ENCODE measurements at regions of chr4 and their contacts with region 1.

Region 1: DNA sequence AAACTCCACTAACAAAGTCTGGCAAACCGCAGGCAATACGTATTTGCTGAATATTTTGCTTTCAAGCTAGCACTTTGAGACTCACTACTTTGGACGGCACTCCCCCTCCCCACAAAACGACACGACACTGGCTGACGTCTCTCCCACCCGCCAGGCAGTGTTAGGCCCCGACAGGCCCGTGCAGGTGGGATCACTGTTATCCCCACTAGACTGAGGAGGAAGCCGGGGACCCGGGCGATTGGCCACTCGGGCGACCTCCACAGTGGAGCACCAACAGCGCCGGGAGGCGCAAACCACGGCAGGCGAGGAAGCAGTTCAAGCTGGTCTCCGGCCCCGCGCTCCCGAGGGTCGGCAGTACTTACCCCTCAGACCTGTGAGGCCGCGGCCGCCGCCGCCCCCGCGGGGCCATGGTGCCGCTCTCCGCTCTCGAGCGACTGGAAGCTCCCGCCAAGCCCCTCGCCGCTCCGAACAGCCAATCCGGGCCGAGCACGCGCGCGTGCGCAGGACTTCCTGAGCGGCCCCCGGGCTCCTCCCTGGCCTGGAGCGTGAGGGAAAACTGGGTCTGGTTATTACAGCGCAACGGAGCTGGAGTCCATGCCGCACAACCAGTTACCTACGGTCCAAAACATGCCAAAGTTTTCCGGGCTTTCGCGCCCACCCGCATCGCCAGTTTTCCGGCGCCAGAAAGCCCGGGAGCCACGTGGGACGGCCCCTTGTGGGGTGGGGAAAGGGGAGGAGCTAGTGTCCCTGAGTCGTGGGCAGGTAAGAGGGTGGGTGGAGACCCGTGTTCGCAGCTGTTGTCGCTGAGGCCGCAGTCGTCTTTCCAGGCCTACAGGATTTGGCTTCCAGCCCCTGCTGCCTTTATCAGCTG is at the start of gene CENPU:
- DNase-seq: peak; percentile 96 to 97
- ATAC-seq: peak; percentile 98 to 99 (median 98)
- H3K4me3 ChIP-seq: peak within 1 kb of the TSS; percentile 97
- H3K27ac ChIP-seq: peak within 1 kb of the TSS; percentile 71
- H3K4me1 ChIP-seq: peaks cover 9% of the 10 kb centered on the region
- H3K27me3 ChIP-seq: no peaks in the 10 kb centered on the region
- CTCF ChIP-seq: no peak
- total RNA-seq, gene CENPU: 0.63 to 1.6 (median 0.93) TPM

Region 2: DNA sequence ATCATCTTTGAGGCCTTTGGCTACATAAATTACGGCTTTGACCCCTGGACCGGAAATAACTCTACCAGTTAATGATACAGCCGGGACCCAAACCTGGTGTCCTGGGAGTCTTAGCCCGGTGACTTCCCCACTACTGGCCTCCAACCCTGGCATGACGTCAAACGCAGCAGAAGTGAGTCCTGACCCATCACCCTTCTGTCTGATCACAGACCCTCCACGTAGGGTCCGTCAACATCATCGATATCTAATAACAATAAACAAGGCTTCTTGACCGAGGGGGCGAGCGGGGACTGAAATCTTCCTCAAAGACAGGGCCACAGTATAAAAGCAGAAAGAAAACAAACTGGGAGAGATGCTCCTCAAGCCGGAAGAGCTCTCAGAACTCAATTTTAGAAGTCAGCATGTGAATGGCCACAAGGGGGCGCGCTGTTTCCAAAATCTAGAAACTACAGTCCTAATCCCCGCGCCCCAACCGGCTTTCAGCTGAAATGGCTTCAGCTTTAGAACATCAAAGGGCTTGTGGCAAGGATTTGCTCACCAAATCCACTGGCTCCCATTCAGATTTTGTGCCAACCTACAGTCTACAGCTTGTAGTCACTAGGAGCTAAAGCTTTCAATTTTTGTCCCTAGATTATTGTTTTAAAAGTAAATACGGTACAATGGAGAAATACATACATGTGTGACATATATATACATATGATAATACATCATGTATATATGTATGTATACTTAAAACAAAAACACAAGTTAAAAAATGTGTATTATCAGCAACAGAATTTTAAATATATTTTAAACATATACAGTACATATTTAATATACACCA is 469.8 kb before region 1 on chr4:
- intact Hi-C with region 1: loop called in 1 of 2 experiments (anchors 10 kb)
- DNase-seq: peak; percentile 93 to 95
- ATAC-seq: peak; percentile 78 to 95 (median 86)
- H3K4me3 ChIP-seq: no peak overlapping the region
- H3K27ac ChIP-seq: no peak overlapping the region
- H3K4me1 ChIP-seq: no peaks in the 10 kb centered on the region
- H3K27me3 ChIP-seq: no peaks in the 10 kb centered on the region
- CTCF ChIP-seq: peak; percentile 95

Region 3: DNA sequence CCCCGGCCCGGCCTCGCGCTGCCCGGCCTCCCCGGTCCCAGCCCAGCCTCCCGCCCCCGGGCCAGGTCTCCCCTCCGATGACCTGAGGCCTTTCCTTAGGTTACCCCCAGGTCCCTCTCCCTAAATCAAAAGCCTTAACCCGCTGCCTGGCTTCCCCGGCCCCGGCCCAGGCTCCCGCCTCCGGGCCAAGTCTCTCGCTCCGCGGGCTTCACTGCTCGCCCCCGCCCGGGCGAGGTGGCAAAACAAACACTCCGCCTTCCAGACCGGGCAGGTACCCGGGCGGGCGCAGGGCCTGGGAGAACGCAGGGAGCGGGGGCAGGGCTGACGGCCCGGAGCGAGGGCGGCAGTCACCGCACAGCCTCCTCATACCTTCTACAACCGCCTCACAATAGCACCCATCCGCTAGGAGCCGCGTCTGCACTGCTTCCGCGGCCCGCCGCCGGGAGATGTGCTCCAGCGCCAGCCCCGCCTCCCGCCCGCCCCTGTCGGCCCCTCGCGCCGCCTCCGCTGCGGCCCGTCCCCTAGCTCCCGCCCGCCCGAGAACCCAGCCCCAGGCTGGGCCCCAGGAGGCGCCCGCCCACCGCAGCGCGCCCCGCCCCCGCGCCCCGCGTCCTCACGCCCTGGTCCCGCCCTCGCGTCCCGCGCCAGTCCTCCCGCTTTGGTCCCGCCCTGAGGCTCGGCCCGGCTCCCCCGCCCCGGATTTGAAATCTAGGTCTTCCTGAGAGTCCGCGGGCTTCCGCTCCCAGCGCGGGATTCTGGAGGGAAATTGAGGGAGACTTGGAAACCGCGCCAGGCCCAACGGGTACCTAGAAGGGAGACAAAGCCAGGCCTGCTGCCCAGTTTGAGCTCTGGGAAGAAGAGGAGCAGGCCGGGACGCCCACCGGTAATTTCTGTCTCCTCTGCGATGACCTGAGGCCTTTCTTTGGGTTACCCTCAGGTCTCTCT is 84.6 kb before region 1 on chr4 and contains the starts of genes CASP3 and PRIMPOL:
- intact Hi-C with region 1: loop called in 1 of 2 experiments (anchors 5 kb)
- DNase-seq: peak; percentile 98 to 99
- ATAC-seq: peak; percentile 92 to 95 (median 94)
- H3K4me3 ChIP-seq: peak within 1 kb of the TSS; percentile 91
- H3K27ac ChIP-seq: peak within 1 kb of the TSS; percentile 99
- H3K4me1 ChIP-seq: peaks cover 53% of the 10 kb centered on the region
- H3K27me3 ChIP-seq: no peaks in the 10 kb centered on the region
- CTCF ChIP-seq: peak; percentile 29
- total RNA-seq, gene CASP3: 13.8 to 49.7 (median 20.5) TPM
- total RNA-seq, gene PRIMPOL: 4.8 to 10.1 (median 7.5) TPM

Region 4: GRCh38 chr4:185183619-185184281 is 449.9 kb after region 1 on chr4:
- intact Hi-C with region 1: no loop called
- DNase-seq: peak; percentile 59 to 68
- ATAC-seq: peak; percentile 55 to 87 (median 76)
- H3K4me3 ChIP-seq: no peak overlapping the region
- H3K27ac ChIP-seq: no peak overlapping the region
- H3K4me1 ChIP-seq: no peaks in the 10 kb centered on the region
- H3K27me3 ChIP-seq: no peaks in the 10 kb centered on the region
- CTCF ChIP-seq: peak; percentile 85

Region 5: DNA sequence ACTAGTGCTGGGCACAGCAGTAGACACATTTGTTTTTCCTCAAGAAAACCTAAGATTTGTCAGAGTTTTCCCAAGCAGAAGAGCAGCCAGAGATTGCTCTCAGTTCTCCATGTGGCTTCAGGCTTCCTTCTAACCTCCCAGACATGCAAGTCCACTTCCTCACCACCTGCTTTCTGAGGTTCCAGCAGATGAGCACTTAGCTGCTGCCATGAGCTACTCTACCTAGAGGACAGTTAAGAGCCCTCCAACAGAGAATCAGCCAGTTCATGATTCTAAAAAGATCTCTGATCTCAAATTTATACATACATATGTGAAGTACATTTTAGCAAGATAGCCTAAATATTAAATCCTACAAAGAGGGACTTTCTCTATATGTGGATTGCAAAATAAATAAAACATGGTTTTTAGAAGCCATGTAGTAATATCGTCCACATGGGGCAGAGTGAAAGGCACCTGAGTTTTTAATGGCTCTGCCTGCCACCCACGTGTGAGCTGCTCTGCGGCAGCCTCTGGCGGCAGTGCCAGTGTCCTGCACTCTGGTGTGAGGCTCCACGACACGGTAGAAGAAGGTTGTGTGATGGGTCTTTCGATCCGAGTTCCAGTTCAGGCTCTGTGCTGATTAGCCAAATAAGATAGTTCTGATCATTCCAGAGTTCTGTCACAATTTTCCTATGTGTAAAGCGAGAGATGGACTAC is 1467.8 kb after region 1 on chr4:
- intact Hi-C with region 1: loop called in 1 of 2 experiments (anchors 5 kb)
- DNase-seq: no peak
- ATAC-seq: peak; percentile 79 to 96 (median 90)
- H3K4me3 ChIP-seq: no peak overlapping the region
- H3K27ac ChIP-seq: peak overlapping the region; percentile 13
- H3K4me1 ChIP-seq: no peaks in the 10 kb centered on the region
- H3K27me3 ChIP-seq: no peaks in the 10 kb centered on the region
- CTCF ChIP-seq: peak; percentile 68

Measured in psoas muscle (tissue), 8 donors.